ENCODE measurements at regions of chr6 and their contacts with region 1.

Region 1: GRCh38 chr6:88908598-88909548 is 54.5 kb downstream of the RNGTT start:
- DNase-seq: no peak
- H3K4me3 ChIP-seq: no peak overlapping the region
- H3K27ac ChIP-seq: no peak overlapping the region
- H3K4me1 ChIP-seq: peaks cover 10% of the 10 kb centered on the region
- CTCF ChIP-seq: no peak

Region 2: DNA sequence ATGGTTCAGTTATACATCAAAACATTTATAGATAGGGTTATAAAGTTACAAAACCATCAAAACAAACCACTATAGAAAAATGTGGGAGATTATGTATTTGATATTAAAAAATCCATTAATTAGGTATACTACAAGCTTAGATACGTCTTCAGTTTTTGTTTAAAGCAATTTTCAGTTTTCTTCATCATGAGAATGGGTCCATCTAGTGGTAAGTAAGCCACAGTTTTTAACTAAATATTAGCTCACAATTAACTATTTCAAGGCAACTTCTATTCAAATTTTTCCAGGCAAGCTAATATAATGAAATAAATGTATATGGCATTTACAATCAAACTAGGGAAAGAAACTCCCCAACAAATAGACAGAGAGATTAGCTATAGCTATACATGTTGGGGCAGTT is 10.2 kb after region 1 on chr6:
- CTCF ChIA-PET with region 1: interaction called, 3 read pairs
- POLR2A ChIA-PET with region 1: interaction called, 17 read pairs
- intact Hi-C with region 1: no loop called
- DNase-seq: peak; percentile 19
- H3K4me3 ChIP-seq: no peak overlapping the region
- H3K27ac ChIP-seq: no peak overlapping the region
- H3K4me1 ChIP-seq: peaks cover 6% of the 10 kb centered on the region
- CTCF ChIP-seq: peak; percentile 82